Left colon (tissue), 2 donors: ENCODE measurements at regions of chr3 and their contacts with region 1.

Region 1: GRCh38 chr3:106589311-106589942 is 720.6 kb upstream of the CBLB start:
- DNase-seq: no peak
- ATAC-seq: no peak

Region 2: DNA sequence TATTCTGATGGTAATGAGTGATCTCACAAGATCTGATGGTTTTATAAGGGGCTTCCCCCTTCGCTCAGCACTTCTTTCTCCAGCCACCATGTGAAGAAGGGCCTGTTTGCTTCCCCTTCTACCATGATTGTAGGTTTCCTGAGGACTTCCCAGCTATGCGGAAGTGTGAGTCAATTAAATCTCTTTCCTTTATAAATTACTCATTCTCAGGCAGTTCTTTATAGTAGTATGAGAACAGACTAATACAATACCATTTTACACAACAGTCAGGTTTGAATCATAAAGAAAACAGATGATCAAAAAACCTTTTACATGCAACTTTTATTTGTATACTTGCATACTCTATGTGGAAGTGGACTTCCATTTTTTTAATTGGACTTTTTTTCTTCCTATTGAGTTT is 673.9 kb before region 1 on chr3:
- intact Hi-C with region 1: loop called in 1 of 2 experiments (anchors 10 kb)
- DNase-seq: no peak
- ATAC-seq: no peak